PC-3 (cell line): ENCODE measurements at regions of chr12 and their contacts with region 1.

Region 1: DNA sequence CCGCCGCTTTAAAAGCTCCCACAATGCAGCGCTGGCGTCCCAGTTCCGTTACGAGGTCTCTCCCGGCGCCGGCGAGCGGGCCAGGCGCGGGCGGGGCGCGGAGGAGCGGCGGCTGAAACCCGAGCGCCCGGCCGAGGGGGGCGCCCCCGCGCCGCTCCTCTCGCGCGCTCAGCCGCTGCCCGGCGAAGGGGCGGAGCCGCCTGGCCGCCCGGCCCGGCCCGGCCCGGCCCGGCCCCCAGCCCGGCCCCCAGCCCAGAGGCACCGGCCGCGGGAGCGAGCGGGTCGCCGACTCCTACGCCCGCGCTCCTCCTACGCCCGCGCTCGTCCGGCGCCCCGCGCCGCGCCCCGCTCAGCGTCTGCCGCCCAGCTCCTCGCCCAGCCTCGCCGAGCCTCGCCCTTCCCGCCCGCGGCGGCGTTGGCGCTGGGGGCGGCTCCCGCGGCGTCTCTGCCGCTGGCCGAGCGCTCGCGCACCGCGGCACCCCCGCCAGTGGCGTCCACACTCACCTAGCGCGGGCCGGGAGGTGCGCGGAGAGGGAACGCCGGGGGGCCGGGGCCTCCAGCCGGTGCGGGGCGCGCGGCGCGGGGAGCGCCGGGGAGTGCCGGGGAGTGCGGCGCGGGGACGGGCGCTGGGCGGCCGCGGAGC is at the start of gene RASSF8:
- DNase-seq: peak; percentile 90
- ATAC-seq: peak; percentile 79
- H3K4me3 ChIP-seq: peak within 1 kb of the TSS; percentile 89
- H3K27ac ChIP-seq: peak within 1 kb of the TSS; percentile 96
- H3K4me1 ChIP-seq: peaks cover 26% of the 10 kb centered on the region
- H3K27me3 ChIP-seq: no peaks in the 10 kb centered on the region
- CTCF ChIP-seq: no peak
- total RNA-seq, gene RASSF8: 51.2 and 87.8 TPM in 2 replicates

Region 2: DNA sequence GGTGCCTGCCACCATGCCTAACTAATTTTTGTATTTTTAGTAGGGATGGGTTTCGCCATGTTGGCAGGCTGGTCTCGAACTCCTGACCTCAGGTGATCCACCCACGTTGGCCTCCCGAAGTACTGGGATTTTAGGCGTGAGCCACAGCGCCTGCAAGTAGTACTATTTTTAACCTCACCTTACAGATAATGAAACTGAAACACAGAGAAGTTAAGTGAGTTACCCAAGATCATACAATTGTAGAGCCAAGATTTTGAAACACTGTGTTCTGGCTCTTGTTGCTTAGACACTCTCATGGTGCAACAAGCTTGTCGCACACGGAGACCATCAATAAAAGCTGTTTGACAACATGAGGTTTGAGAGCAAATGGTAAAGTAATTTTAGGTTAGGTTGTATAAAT is 246.4 kb before region 1 on chr12:
- CTCF ChIA-PET with region 1: no interaction called
- POLR2A ChIA-PET with region 1: no interaction called
- intact Hi-C with region 1: no loop called
- DNase-seq: no peak
- ATAC-seq: no peak
- H3K4me3 ChIP-seq: no peak overlapping the region
- H3K27ac ChIP-seq: no peak overlapping the region
- H3K4me1 ChIP-seq: no peaks in the 10 kb centered on the region
- H3K27me3 ChIP-seq: no peaks in the 10 kb centered on the region
- CTCF ChIP-seq: no peak

Region 3: GRCh38 chr12:25811656-25812126 is 146.9 kb before region 1 on chr12:
- CTCF ChIA-PET with region 1: no interaction called
- POLR2A ChIA-PET with region 1: interaction called, 3 read pairs
- intact Hi-C with region 1: loop called (anchors 2 kb)
- DNase-seq: peak; percentile 69
- ATAC-seq: peak; percentile 59
- H3K4me3 ChIP-seq: peak overlapping the region; percentile 19
- H3K27ac ChIP-seq: peak overlapping the region; percentile 85
- H3K4me1 ChIP-seq: peaks cover 43% of the 10 kb centered on the region
- H3K27me3 ChIP-seq: no peaks in the 10 kb centered on the region
- CTCF ChIP-seq: no peak

Region 4: GRCh38 chr12:25906651-25907340 is 51.8 kb before region 1 on chr12:
- CTCF ChIA-PET with region 1: no interaction called
- POLR2A ChIA-PET with region 1: interaction called, 11 read pairs
- intact Hi-C with region 1: no loop called
- DNase-seq: no peak
- ATAC-seq: no peak
- H3K4me3 ChIP-seq: no peak overlapping the region
- H3K27ac ChIP-seq: no peak overlapping the region
- H3K4me1 ChIP-seq: peaks cover 7% of the 10 kb centered on the region; the same call in 1 of the 2 replicates
- H3K27me3 ChIP-seq: no peaks in the 10 kb centered on the region
- CTCF ChIP-seq: no peak

Region 5: DNA sequence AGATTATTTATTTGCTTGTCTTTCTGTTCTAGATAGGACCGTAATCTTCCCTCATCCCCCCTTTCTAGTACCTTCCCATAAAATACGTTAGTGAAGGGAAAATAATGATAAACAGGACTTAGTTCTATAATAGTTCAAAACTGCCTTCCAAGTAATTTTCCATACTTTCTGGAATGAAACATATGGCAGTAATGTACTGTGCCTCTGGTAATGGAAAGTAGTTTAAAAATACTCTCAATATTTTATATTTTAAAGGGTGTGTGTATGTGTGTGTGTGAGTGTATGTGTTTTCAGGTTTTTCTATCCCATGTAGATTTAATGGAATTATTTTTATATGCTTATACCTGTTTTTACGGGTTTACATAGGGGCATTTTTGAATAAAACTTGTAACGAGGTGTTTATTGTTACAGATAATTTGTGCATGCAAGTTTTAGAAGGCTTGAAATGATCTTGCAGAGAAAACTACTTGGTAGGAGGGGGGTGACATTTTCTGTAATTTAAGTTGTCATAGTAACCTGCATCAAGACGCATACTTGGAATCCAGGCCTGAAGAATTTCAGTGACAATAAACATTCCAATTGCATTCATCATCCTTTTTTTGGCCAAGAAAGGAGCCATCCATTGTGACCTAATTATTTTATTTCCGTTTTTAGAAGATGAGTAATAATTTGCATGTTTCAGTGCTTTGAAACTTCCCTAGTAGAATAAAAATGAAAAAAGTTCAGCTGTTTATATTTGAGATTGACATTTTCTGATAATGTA is 38.8 kb after region 1 on chr12:
- CTCF ChIA-PET with region 1: interaction called, 6 read pairs
- POLR2A ChIA-PET with region 1: interaction called, 3 read pairs
- intact Hi-C with region 1: loop called (anchors 1 kb)
- DNase-seq: peak; percentile 100
- ATAC-seq: peak; percentile 80
- H3K4me3 ChIP-seq: peak overlapping the region; percentile 12; the same call in 1 of the 2 replicates
- H3K27ac ChIP-seq: peak overlapping the region; percentile 27
- H3K4me1 ChIP-seq: peaks cover 43% of the 10 kb centered on the region
- H3K27me3 ChIP-seq: no peaks in the 10 kb centered on the region
- CTCF ChIP-seq: no peak

Region 6: GRCh38 chr12:26091822-26092221 is 133.3 kb after region 1 on chr12:
- CTCF ChIA-PET with region 1: interaction called, 6 read pairs
- POLR2A ChIA-PET with region 1: no interaction called
- intact Hi-C with region 1: loop called (anchors 5 kb)
- DNase-seq: peak; percentile 47
- ATAC-seq: peak; percentile 60
- H3K4me3 ChIP-seq: no peak overlapping the region
- H3K27ac ChIP-seq: no peak overlapping the region
- H3K4me1 ChIP-seq: peaks cover 30% of the 10 kb centered on the region
- H3K27me3 ChIP-seq: no peaks in the 10 kb centered on the region
- CTCF ChIP-seq: peak; percentile 65